Activated CD8-positive, alpha-beta T cell treated with anti-CD3 and anti-CD28 coated beads for 36 hours (primary cell): ENCODE measurements at regions of chrX and their contacts with region 1.

Region 1: DNA sequence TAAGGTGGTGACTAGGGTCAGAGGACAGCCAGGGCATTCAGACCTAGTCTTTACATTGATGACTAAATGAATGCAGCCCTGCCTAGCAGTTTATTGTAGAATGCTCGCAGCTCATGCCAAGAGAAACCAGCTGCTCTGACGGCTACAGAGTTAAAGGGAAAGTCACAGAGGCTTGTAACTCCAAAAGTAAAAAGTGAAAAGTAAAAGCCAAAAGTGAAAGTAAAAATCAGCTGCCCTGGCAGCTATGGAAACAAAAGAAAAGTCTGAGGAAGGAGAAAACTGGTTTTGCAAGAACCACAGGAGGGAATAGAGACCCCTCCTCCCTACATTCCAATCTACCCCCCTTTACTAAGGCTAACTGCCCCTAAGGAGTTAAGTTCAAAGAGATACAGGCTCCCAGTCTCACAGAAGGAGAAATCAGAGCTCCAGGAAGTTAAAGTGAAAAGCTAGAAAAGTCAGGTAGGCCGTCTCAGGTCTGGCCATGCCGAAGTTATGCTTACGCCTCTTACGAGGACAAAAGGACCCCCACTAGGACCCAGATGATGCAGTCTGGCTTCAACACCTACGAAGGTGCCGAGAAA is 6.0 kb downstream of the GAGE10 start:
- DNase-seq: peak; percentile 25
- ATAC-seq: peak; percentile 47
- H3K4me3 Mint-ChIP-seq: peak overlapping the region; percentile 70
- H3K27ac Mint-ChIP-seq: peak overlapping the region; percentile 88
- H3K4me1 Mint-ChIP-seq: peaks cover 21% of the 10 kb centered on the region
- H3K27me3 Mint-ChIP-seq: no peaks in the 10 kb centered on the region
- CTCF ChIP-seq: no peak

Region 2: DNA sequence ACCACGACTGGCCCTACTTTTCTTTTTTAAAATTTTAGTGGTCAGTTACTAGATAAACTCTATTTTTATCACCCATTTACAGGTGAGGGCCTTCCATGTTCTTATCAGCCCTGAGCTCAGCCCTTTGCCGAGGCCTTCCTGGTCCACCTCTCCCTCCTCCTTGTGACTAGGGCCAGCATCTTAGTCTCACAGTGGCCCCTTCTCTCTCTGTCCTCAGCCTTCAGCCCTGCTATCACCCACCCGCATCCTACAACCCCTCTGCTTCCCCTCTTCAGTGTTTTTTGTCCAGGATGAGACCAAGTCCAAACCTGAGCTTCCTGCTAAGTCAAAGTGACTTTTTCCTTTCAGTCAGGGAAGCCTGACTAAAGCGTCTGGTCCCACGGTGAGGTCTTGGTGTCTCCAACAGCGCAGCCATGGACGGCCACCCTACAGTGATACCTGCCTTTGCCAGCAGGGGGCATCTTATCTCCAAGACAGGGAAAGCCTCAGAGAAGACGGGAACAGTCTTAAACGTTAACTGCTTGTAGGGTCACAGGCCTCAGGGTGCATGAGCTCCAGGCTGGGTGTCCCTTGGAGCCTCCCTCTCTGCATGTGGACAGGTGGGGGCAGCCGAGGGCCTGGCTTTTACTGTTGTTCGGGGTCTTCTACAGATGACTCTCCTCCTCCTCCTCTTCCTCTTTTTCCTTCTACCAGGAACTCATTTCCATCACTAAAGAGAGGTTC is 17.7 kb before region 1 on chrX:
- CTCF ChIA-PET with region 1: interaction called, 21 read pairs
- POLR2A ChIA-PET with region 1: no interaction called
- intact Hi-C with region 1: no loop called
- DNase-seq: peak; percentile 87
- ATAC-seq: peak; percentile 95
- H3K4me3 Mint-ChIP-seq: no peak overlapping the region
- H3K27ac Mint-ChIP-seq: peak overlapping the region; percentile 69
- H3K4me1 Mint-ChIP-seq: peaks cover 23% of the 10 kb centered on the region
- H3K27me3 Mint-ChIP-seq: no peaks in the 10 kb centered on the region
- CTCF ChIP-seq: peak; percentile 71